K562 (cell line): ENCODE measurements at regions of chr17 and their contacts with region 1.

Region 1: GRCh38 chr17:50094753-50095619 is at the start of gene PDK2:
- DNase-seq: peak; percentile 74 to 93 (median 85)
- ATAC-seq: peak; percentile 97
- H3K4me3 ChIP-seq: peak within 1 kb of the TSS; percentile 34
- H3K27ac ChIP-seq: no peak within 1 kb of the TSS
- H3K4me1 ChIP-seq: peaks cover 3 to 17% of the 10 kb centered on the region in 2 experiments; a peak in 4 of 5 replicates
- H3K27me3 ChIP-seq: peaks cover 7 to 33% of the 10 kb centered on the region in 2 experiments; a peak in 4 of 5 replicates
- CTCF ChIP-seq: no peak
- EP300 ChIP-seq: no peak
- POLR2A ChIP-seq: no peak
- RAD21 ChIP-seq: no peak
- polyA plus RNA-seq, gene PDK2: 0.03 to 0.08 TPM

Region 2: DNA sequence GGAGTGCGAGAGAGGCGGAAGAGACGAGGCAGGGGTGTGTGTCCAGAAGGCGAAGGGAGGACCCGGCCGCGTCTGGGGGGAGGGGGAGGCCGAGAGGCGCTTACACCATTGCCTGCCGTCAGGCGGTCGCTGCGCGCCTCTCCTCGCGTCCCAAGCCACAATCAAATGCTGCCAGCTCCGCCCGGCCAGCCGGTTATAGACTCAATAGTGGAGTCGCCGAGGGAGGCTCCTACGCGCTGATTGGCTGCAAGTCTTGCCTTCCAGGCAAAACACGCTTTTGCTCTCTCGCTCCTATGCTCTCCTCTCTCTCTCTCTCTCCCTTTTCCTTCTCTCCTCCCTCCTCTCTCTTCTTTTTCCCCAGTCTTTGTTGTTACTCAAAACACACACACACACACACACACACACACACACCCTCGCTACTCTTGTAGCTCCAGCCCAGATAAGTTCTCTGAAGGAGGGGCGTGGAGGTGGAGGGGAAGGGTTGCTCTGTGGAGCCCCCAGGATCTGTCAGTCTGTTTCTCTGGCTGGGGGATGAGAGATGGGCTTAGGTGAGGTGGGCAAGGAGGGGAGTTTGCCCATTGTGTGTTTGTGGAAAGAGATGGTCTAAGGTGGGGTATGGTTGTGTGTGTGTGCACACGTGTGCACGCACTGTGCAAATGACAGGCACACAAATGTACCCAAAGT is 99.8 kb before region 1 on chr17 and contains the start of gene DLX3:
- CTCF ChIA-PET with region 1: no interaction called
- POLR2A ChIA-PET with region 1: no interaction called
- in situ Hi-C with region 1: no loop called
- intact Hi-C with region 1: no loop called
- DNase-seq: peak in 1 of 4 experiments; percentile 13
- ATAC-seq: no peak
- H3K4me3 ChIP-seq: no peak within 1 kb of the TSS
- H3K27ac ChIP-seq: no peak within 1 kb of the TSS
- H3K4me1 ChIP-seq: peaks cover 0 to 25% of the 10 kb centered on the region in 2 experiments; a peak in 2 of 5 replicates
- H3K27me3 ChIP-seq: peaks cover 38 to 64% of the 10 kb centered on the region in 2 experiments; a peak in 4 of 5 replicates
- CTCF ChIP-seq: no peak
- EP300 ChIP-seq: no peak
- POLR2A ChIP-seq: no peak
- RAD21 ChIP-seq: no peak
- polyA plus RNA-seq, gene DLX3: not detected

Region 3: GRCh38 chr17:50079334-50080095 is 15.5 kb before region 1 on chr17:
- CTCF ChIA-PET with region 1: no interaction called
- POLR2A ChIA-PET with region 1: no interaction called
- in situ Hi-C with region 1: no loop called
- intact Hi-C with region 1: no loop called
- DNase-seq: peak; percentile 67 to 76 (median 73)
- ATAC-seq: peak; percentile 92
- H3K4me3 ChIP-seq: no peak overlapping the region
- H3K27ac ChIP-seq: no peak overlapping the region
- H3K4me1 ChIP-seq: peaks cover 0 to 18% of the 10 kb centered on the region in 2 experiments; a peak in 1 of 5 replicates
- H3K27me3 ChIP-seq: peaks cover 12 to 29% of the 10 kb centered on the region in 2 experiments
- CTCF ChIP-seq: peak; percentile 99 to 100 (median 100)
- EP300 ChIP-seq: no peak
- POLR2A ChIP-seq: no peak
- RAD21 ChIP-seq: peak; percentile 31 to 73; a peak in 2 of 4 replicates

Region 4: DNA sequence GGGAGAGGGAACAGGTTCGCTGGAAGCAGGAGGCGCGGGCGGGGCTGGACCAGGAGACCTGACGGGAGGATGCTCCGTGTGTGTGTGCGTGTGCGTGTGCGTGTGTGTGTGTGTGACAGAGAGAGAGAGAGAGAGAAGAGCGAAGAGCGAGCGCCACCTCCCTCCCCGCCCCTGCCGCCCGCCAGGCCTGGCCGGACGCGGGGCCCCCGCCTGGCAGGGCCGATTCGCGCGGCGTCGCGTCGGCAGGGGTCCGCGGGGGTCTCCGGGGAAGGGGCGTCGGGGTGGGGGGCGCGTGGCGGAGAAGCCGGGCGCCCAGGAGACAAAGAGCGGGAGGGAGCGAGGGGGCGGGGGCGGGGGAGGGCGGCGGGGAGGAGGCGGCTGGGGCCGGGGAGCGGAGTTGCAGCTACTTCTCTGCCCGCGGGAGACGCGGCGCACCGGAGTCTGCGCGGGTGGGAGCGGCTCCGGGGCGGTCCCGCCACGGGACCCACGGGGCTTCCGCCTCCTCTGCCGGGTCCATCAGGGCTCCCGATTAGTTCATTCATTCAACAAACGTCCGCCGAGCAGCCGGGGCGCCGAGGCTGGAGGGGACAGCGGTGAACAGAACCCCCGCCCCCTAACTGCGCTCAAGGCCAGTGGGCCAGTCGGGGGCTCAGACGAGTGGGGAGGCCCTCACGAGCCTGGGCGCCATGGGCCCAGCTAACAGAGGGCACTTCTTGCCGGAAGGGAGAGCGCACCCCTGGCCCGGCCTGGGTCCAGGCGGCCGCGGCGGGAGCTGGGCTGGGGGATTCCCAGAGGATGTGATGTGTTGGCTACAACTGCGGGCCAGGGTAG is 35.0 kb after region 1 on chr17 and contains the start of gene SAMD14:
- CTCF ChIA-PET with region 1: no interaction called
- POLR2A ChIA-PET with region 1: no interaction called
- in situ Hi-C with region 1: no loop called
- intact Hi-C with region 1: no loop called
- DNase-seq: peak; percentile 28 to 82 (median 72)
- ATAC-seq: peak; percentile 49; the same call in 2 of the 3 replicates
- H3K4me3 ChIP-seq: no peak within 1 kb of the TSS; the same call in 1 of the 2 replicates
- H3K27ac ChIP-seq: no peak within 1 kb of the TSS
- H3K4me1 ChIP-seq: peaks cover 8 to 29% of the 10 kb centered on the region in 2 experiments
- H3K27me3 ChIP-seq: peaks cover 2 to 15% of the 10 kb centered on the region in 2 experiments; a peak in 3 of 5 replicates
- CTCF ChIP-seq: no peak
- EP300 ChIP-seq: no peak
- POLR2A ChIP-seq: no peak
- RAD21 ChIP-seq: no peak
- polyA plus RNA-seq, gene SAMD14: not detected

Region 5: GRCh38 chr17:50161023-50161910 is 66.3 kb after region 1 on chr17:
- CTCF ChIA-PET with region 1: interaction called, 6 read pairs
- POLR2A ChIA-PET with region 1: no interaction called
- in situ Hi-C with region 1: no loop called
- intact Hi-C with region 1: loop called (anchors 1 kb)
- DNase-seq: peak; percentile 94 to 99 (median 99)
- ATAC-seq: peak; percentile 99
- H3K4me3 ChIP-seq: peak overlapping the region; percentile 45
- H3K27ac ChIP-seq: no peak overlapping the region
- H3K4me1 ChIP-seq: peaks cover 10 to 20% of the 10 kb centered on the region in 2 experiments; a peak in 3 of 5 replicates
- H3K27me3 ChIP-seq: no peaks in the 10 kb centered on the region
- CTCF ChIP-seq: peak; percentile 94 to 97 (median 97)
- EP300 ChIP-seq: 0 out of 2 replicates have a peak, but pooled peaks have one; percentile 25
- POLR2A ChIP-seq: 0 out of 2 replicates have a peak, but pooled peaks have one; percentile 22
- RAD21 ChIP-seq: peak; percentile 79 to 88

Region 6: DNA sequence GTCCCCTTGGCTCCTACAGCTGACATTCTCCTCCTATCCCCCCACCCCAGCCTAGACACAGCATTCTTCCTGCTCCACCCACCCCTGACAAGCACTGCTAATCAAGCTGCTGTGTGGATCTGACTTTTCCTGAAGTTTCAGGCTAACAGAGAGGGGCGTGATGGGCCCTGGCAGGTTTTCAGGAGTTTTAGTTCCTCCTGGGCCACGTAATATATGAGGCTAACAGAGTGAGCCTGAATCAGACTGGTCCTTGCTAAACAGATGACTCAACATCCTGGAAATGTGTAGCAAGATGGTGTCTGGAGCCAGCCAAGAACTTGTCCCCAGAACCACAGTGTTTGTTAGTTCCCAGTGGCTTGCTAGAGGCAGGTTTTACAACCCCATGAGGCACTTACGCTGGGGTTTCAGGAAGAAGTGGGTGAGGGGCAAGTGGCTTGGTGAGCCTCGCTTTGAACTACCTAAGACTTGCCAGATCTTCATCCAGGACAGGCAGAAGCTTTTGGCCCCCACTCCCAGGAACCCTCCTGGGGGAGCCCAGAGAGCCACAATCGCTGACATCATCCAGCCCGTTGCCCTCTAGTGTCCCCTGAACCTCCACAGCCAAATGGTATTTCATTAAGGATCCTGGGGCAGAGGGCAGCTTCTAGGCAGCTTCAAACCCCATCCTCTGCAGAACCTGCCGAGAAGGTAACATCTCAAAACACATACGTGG is 195.2 kb after region 1 on chr17:
- CTCF ChIA-PET with region 1: interaction called, 6 read pairs
- POLR2A ChIA-PET with region 1: interaction called, 3 read pairs
- in situ Hi-C with region 1: loop called (anchors 5 kb)
- intact Hi-C with region 1: no loop called
- DNase-seq: peak in 1 of 4 experiments; percentile 37
- ATAC-seq: peak; percentile 87
- H3K4me3 ChIP-seq: no peak overlapping the region
- H3K27ac ChIP-seq: no peak overlapping the region; the same call in 2 of the 3 replicates
- H3K4me1 ChIP-seq: peaks cover 0 to 14% of the 10 kb centered on the region in 2 experiments; a peak in 3 of 5 replicates
- H3K27me3 ChIP-seq: peaks cover 2 to 31% of the 10 kb centered on the region in 2 experiments; a peak in 3 of 5 replicates
- CTCF ChIP-seq: no peak
- EP300 ChIP-seq: peak; percentile 21; the same call in 1 of the 2 replicates
- POLR2A ChIP-seq: no peak
- RAD21 ChIP-seq: no peak

Region 7: GRCh38 chr17:50297407-50297865 is 202.4 kb after region 1 on chr17:
- CTCF ChIA-PET with region 1: interaction called, 6 read pairs
- POLR2A ChIA-PET with region 1: interaction called, 3 read pairs
- in situ Hi-C with region 1: loop called (anchors 5 kb)
- intact Hi-C with region 1: loop called (anchors 1 kb)
- DNase-seq: peak; percentile 80 to 86 (median 84)
- ATAC-seq: peak; percentile 99
- H3K4me3 ChIP-seq: no peak overlapping the region
- H3K27ac ChIP-seq: no peak overlapping the region
- H3K4me1 ChIP-seq: no peaks in the 10 kb centered on the region; a peak in 1 of 5 replicates
- H3K27me3 ChIP-seq: peaks cover 5 to 30% of the 10 kb centered on the region in 2 experiments; a peak in 4 of 5 replicates
- CTCF ChIP-seq: peak; percentile 94 to 96 (median 95)
- EP300 ChIP-seq: no peak
- POLR2A ChIP-seq: no peak
- RAD21 ChIP-seq: peak; percentile 99